Heart left ventricle (tissue), 16 donors: ENCODE measurements at regions of chr1 and their contacts with region 1.

Region 1: GRCh38 chr1:88327391-88328267 is 356.4 kb upstream of the PKN2 start:
- DNase-seq: no peak
- ATAC-seq: peak in 3 of 4 donors; percentile 82 to 96 (median 85)
- H3K4me3 ChIP-seq: no peak overlapping the region
- H3K27ac ChIP-seq: peak overlapping the region in 9 of 12 donors; percentile 4 to 63 (median 30)
- H3K4me1 ChIP-seq: peaks cover 0 to 16% (median 4%) of the 10 kb centered on the region in 12 donors
- H3K27me3 ChIP-seq: no peaks in the 10 kb centered on the region
- CTCF ChIP-seq: no peak
- POLR2A ChIP-seq: no peak

Region 2: DNA sequence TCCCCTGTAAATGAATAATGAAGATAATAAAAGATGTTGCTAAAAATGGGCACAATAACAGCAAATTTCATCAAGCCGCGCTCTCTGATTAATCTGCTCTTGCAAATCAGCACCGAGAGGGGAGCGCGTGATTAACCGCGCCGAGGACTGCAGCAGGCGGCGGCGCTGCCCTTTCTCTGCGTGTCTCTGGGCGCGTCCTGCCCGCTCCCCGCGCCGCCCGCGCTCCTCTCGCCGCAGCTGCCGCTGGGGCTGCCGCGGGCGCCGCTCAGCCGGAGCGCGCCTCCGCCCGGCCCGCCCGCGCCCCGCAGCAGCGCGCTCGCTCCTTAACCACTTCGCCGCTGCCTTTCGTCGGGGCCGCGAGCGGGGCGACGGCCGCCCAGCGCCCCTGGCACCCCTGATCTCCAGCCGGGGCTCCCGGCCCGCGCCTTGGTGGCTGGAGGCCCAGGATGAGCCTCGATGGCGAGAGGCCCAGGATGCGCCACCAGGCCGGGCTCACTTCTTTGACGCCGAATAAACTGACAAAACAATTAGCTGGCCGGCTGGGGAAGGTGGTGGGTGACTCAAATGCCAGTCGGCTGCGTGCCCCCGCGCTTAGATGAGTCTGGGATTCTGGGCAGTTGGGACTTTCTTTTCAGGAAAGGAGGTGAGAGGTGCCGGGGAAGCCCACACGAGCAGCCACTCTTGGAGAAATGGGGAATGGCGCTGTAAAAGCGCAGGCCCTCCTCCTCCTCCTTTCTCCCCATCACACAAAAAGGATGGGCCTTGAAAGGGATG is 135.0 kb after region 1 on chr1:
- intact Hi-C with region 1: loop called in 1 of 10 experiments (anchors 10 kb)
- DNase-seq: peak in 4 of 5 donors; percentile 26 to 66 (median 46)
- ATAC-seq: peak; percentile 54 to 88 (median 74)
- H3K4me3 ChIP-seq: peak overlapping the region in 11 of 12 donors; percentile 7 to 61 (median 47)
- H3K27ac ChIP-seq: peak overlapping the region; percentile 39 to 84 (median 66)
- H3K4me1 ChIP-seq: peaks cover 0 to 4% (median 0%) of the 10 kb centered on the region in 12 donors
- H3K27me3 ChIP-seq: peaks cover 0 to 24% (median 0%) of the 10 kb centered on the region in 9 donors
- CTCF ChIP-seq: no peak
- POLR2A ChIP-seq: no peak